Heart right ventricle (tissue), 16 donors: ENCODE measurements at regions of chr1 and their contacts with region 1.

Region 1: GRCh38 chr1:54406339-54407153 is at the start of gene SSBP3:
- DNase-seq: peak; percentile 92 to 95
- ATAC-seq: peak; percentile 83 to 95 (median 91)
- H3K4me3 ChIP-seq: peak within 1 kb of the TSS; percentile 82 to 98 (median 92)
- H3K27ac ChIP-seq: peak within 1 kb of the TSS; percentile 85 to 98 (median 93)
- H3K4me1 ChIP-seq: peaks cover 10 to 57% (median 46%) of the 10 kb centered on the region in 9 donors
- H3K27me3 ChIP-seq: no peaks in the 10 kb centered on the region
- CTCF ChIP-seq: peak in 3 of 9 donors; percentile 19 to 23 (median 22)
- total RNA-seq, gene SSBP3: 33.7 to 71.9 (median 52.8) TPM

Region 2: DNA sequence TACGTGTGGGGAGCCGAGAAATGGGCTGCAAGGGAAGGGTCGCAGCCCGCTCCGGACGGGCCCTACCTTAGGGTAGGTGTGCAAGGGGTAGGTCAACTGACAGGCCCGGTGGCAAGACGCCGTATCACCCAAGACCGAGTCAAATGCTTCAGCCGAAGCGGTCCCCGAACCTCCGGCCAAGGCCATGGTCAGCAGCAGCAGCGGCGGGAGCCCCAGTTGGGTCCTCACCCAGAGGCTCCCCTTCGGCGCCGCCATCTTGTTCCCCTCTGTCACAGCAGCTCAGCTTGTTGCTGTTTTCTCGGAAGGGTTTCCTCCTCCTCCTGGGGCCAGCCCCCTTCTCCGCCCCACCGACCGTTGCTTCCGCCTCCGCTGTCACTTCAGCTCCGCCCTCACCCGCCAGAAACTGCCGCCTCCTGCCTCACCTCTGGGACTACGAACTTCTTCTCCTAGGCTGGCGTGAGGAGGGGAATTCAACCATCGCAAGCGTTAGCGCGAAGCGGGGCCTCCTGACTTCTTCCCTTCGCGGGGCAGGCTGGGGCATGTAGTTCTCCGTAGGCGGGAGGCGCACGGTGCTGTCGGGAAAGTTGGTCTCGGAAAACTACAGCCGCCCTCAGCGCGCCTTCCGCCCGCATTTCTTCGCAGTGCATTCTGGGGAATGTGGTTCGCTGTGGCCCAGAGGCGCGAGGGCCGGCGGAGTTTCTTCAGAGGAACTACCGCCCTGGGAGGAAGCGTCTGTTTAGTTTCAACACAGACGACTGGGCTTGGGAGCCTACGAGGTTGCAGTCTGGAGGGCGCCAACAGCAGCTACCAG is 353.4 kb before region 1 on chr1 and contains the starts of genes TCEANC2 and TMEM59:
- intact Hi-C with region 1: loop called in 1 of 10 experiments (anchors 10 kb)
- DNase-seq: peak; percentile 96 to 98
- ATAC-seq: peak; percentile 96 to 98 (median 97)
- H3K4me3 ChIP-seq: peak within 1 kb of the TSS; percentile 78 to 93 (median 85)
- H3K27ac ChIP-seq: peak within 1 kb of the TSS; percentile 81 to 98 (median 95)
- H3K4me1 ChIP-seq: peaks cover 9 to 56% (median 49%) of the 10 kb centered on the region in 9 donors
- H3K27me3 ChIP-seq: no peaks in the 10 kb centered on the region
- CTCF ChIP-seq: no peak
- total RNA-seq, gene TCEANC2: 2.3 to 5.9 (median 4.1) TPM
- total RNA-seq, gene TMEM59: 285 to 474 (median 345) TPM

Region 3: DNA sequence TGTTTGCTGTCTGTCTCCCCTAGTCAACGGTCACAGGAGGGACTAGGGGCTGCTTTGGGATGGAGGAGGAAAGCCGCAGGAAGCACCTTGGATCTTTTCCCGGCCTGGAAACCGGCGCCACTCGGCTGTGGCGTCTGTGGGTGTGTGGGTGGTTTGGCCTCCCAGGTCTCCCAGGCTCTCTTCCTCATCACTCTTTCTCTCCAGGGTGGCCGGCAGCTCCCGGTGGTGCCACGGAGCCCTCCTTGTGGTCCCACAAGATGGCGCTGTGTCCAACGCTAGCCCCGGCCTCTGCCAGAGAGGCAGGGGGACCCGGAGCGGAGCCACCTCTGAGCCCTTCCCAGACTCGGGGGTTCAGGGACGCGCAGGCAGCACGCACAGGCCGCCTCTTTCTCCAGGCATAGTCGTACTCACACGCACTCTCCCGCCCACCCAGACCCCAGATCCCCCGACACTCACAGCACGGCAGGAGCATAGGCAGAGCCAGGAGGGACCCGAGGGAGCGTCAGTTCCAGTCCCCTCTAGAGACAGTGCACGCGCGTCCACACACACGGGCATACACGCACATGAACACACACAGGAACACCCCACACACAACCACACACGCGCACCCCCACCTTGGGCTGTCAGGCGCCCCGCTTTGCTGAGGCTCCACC is 284.9 kb before region 1 on chr1:
- intact Hi-C with region 1: loop called in 8 of 10 experiments (anchors 5 to 10 kb)
- DNase-seq: peak; percentile 79 to 83
- ATAC-seq: peak; percentile 85 to 94 (median 90)
- H3K4me3 ChIP-seq: peak overlapping the region in 8 of 10 donors; percentile 1 to 41 (median 34)
- H3K27ac ChIP-seq: no peak overlapping the region
- H3K4me1 ChIP-seq: peaks cover 0 to 15% (median 10%) of the 10 kb centered on the region in 9 donors
- H3K27me3 ChIP-seq: peaks cover 0 to 13% (median 0%) of the 10 kb centered on the region in 7 donors
- CTCF ChIP-seq: peak; percentile 66 to 89 (median 82)

Region 4: GRCh38 chr1:54137514-54138061 is 269.0 kb before region 1 on chr1:
- intact Hi-C with region 1: no loop called
- DNase-seq: no peak
- ATAC-seq: peak in 5 of 8 donors; percentile 23 to 32 (median 28)
- H3K4me3 ChIP-seq: no peak overlapping the region
- H3K27ac ChIP-seq: no peak overlapping the region
- H3K4me1 ChIP-seq: peaks cover 0 to 6% (median 0%) of the 10 kb centered on the region in 9 donors
- H3K27me3 ChIP-seq: no peaks in the 10 kb centered on the region
- CTCF ChIP-seq: no peak

Region 5: DNA sequence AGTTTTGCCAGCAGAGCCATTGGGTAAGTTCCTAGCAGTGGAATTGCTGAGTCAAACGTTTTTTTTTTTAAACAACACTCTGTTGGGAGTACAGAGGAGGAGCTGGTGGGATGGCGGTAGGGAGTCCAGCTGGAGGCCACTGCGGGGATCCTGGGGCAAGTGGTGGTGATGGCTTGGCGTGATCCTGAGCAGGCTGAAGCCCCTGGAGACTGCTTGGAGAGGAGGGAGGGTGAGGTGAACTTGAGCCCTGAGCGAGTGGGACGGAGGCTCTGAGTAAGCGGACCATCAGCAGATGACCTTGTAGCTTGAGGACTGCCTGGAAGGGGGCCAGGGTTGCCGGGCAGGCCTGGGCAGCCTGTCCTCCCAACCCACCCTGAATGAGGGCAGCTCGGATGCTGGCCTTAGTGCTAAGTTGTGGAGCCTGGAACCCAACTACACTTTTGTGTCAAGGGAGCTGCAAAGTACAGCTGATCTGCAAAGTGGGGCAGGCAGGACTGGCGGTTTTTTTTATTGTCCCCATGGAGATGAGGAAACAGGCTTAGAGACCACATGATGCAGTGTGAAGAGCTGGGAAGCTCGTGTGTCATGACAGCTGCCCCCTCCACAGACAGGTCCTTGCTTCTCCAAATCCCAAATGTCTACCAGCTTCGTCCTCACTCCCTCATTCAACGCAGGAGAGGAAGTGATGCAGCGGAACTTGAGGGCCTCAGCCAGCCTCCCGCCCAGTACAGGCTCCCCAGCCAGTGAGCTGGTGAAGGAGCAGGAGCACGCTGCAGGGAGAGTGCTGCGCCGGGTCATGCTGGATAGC is 186.3 kb before region 1 on chr1:
- intact Hi-C with region 1: loop called in 1 of 10 experiments (anchors 10 kb)
- DNase-seq: peak; percentile 68 to 69
- ATAC-seq: peak; percentile 62 to 84 (median 77)
- H3K4me3 ChIP-seq: peak overlapping the region in 5 of 10 donors; percentile 13 to 25 (median 21)
- H3K27ac ChIP-seq: peak overlapping the region in 9 of 10 donors; percentile 9 to 71 (median 59)
- H3K4me1 ChIP-seq: peaks cover 6 to 39% (median 28%) of the 10 kb centered on the region in 9 donors
- H3K27me3 ChIP-seq: no peaks in the 10 kb centered on the region
- CTCF ChIP-seq: no peak

Region 6: GRCh38 chr1:54230507-54231339 is 175.8 kb before region 1 on chr1:
- intact Hi-C with region 1: no loop called
- DNase-seq: no peak
- ATAC-seq: no peak
- H3K4me3 ChIP-seq: no peak overlapping the region
- H3K27ac ChIP-seq: no peak overlapping the region
- H3K4me1 ChIP-seq: peaks cover 0 to 40% (median 8%) of the 10 kb centered on the region in 9 donors
- H3K27me3 ChIP-seq: no peaks in the 10 kb centered on the region
- CTCF ChIP-seq: no peak

Region 7: DNA sequence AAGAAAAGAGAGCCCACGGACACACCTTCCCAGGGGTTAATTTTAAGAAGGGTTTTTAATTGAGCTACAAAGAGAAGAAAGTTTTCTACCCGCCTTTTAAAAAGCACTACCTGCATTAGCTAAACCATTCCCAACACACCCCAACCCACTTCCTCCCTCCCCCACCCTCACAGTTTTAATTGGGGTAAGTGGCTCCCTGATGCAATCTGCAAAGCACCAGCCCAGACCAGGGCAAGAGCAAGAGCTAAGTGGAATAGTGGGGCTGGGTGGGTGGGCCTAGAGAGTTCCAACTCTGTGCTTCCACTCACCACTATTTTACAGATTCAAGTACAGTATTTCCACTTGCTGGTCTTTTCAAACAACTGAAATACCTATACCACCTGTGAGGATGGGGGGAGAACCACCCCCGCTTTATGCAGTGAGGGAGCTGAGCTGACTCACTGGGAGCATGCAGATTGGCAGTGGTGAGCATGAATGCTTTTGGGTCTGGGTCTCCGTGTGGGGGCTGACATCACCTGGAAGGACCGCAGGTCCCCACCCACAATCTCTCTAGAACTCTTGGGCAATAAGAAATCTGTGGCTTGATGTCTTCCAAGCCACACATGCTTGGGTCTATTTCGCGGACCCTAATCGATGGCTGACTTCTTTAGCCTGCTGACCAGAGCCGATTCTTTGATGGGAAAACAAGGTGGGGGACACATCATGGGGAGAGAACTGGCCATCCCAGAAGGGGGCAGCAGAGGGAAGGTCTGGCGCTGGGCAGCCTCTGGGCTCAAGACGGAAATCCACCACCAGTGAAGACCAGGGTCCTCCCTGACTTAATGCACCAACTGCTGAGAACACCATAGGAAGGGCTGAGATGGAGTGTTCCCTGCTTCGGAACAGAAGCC is 95.9 kb before region 1 on chr1:
- intact Hi-C with region 1: loop called in 5 of 10 experiments (anchors 5 to 10 kb)
- DNase-seq: peak; percentile 57 to 68
- ATAC-seq: peak in 6 of 8 donors; percentile 22 to 52 (median 43)
- H3K4me3 ChIP-seq: no peak overlapping the region
- H3K27ac ChIP-seq: peak overlapping the region in 6 of 10 donors; percentile 19 to 88 (median 74)
- H3K4me1 ChIP-seq: peaks cover 14 to 92% (median 83%) of the 10 kb centered on the region in 9 donors
- H3K27me3 ChIP-seq: no peaks in the 10 kb centered on the region
- CTCF ChIP-seq: peak; percentile 16 to 71 (median 67)

Region 8: DNA sequence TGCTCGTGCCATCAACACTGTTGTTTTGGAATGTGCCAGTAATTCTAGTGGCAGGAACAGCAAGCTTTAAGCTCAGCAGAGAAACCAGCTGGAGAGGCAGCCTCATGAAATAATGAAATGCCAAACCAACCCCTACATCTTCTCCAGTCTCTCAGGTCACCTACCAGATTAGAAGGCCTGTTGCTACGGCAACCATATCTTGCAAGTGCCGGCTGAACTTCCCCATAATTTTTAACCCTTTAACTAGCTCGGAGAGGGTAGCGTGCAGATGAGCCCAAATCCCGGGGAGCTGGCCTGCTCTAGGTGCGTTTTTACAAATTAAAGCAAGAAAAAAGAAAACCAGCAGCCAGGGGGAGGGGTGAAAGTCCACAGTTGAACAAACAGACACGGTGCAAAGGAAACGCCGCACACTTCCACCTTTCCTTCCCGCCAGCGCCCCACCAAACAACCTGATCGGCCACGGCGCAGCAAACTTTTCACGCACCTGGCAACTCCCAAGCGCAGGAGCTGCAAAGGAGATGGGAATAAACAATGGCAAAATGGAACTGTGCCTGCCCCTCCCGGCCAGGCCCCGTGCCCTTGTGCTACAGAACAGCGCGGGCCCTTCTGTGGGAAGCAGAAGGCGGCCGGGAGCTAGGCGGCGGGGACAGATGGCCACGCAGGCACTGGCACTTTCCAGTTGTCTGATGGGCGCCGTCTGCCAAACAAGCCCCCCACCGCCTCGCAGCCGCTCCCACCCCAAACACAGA is 50.4 kb before region 1 on chr1:
- intact Hi-C with region 1: loop called in 2 of 10 experiments (anchors 5 kb)
- DNase-seq: no peak
- ATAC-seq: no peak
- H3K4me3 ChIP-seq: peak overlapping the region in 6 of 10 donors; percentile 3 to 40 (median 16)
- H3K27ac ChIP-seq: peak overlapping the region in 4 of 10 donors; percentile 10 to 48 (median 38)
- H3K4me1 ChIP-seq: peaks cover 17 to 88% (median 62%) of the 10 kb centered on the region in 9 donors
- H3K27me3 ChIP-seq: no peaks in the 10 kb centered on the region
- CTCF ChIP-seq: no peak

Region 9: GRCh38 chr1:54480525-54480848 is 73.9 kb after region 1 on chr1:
- intact Hi-C with region 1: loop called in 2 of 10 experiments (anchors 1 to 5 kb)
- DNase-seq: no peak
- ATAC-seq: no peak
- H3K4me3 ChIP-seq: no peak overlapping the region
- H3K27ac ChIP-seq: peak overlapping the region in 1 of 10 donors; percentile 20
- H3K4me1 ChIP-seq: peaks cover 0 to 41% (median 2%) of the 10 kb centered on the region in 9 donors
- H3K27me3 ChIP-seq: peaks cover 0 to 4% (median 0%) of the 10 kb centered on the region in 7 donors
- CTCF ChIP-seq: no peak